H1 (cell line): ENCODE measurements at regions of chr7 and their contacts with region 1.

Region 1: DNA sequence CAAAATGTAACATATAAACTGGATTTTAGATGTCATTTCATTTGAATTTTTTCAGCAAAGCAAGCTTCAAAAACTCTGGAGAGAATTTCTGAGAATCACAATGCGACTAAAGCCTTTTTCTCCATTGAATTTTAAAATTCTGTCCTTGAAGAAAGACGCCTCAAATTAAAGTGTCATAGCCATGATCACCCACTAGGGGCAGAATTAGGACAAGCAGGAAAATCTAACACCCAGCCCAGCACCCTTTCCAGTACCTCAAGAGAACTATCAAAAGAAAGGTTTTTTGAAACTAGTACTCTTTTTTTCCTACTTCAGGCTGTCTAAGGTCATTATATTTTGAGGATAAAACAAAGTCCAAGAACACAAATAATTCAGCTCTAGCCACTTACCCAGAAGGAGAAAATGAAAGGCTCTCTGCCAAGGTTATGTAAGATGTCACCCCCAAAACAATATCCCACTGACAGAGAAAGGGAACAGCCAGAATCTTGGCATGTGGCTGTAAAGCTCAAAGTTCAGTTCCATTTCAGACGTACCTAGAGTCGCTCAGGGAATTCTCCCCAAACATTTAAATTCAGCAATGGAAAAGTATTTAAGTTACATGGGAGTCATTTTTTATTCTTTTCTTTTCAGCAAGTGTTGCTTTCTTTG is 299.4 kb downstream of the SNX13 start:
- DNase-seq: no peak
- H3K4me3 ChIP-seq: no peak overlapping the region
- H3K27ac ChIP-seq: no peak overlapping the region
- H3K4me1 ChIP-seq: no peaks in the 10 kb centered on the region; a peak in 1 of 7 replicates
- H3K27me3 ChIP-seq: no peaks in the 10 kb centered on the region
- CTCF ChIP-seq: peak in 2 of 3 experiments; percentile 31 to 67; a peak in 2 of 4 replicates
- EP300 ChIP-seq: no peak
- POLR2A ChIP-seq: no peak
- RAD21 ChIP-seq: peak; percentile 34 to 51; a peak in 3 of 4 replicates

Region 2: DNA sequence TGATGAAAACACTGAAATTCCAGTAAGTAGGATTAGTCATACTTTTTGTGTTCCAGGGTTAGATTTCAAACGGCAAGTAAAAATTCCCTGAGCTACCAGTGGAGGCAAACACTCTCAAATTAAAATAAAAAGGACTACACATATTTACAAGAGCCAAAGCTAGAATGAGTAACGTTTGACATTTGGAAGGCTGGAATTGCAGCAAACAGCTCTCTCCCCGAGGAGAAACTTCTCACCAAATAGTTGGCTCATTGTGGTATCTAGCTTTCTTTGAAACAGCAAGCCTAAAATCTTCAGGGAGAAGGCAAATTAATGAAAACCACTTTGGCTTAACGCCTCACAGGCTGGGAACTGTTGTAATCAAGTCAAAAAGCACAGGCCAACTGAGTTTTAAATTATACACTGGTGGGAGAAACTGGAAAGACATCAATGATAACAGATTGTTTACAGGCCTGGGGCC is 11.1 kb after region 1 on chr7:
- CTCF ChIA-PET with region 1: interaction called, 33 read pairs
- POLR2A ChIA-PET with region 1: no interaction called
- DNase-seq: no peak
- H3K4me3 ChIP-seq: no peak overlapping the region
- H3K27ac ChIP-seq: no peak overlapping the region
- H3K4me1 ChIP-seq: no peaks in the 10 kb centered on the region
- H3K27me3 ChIP-seq: no peaks in the 10 kb centered on the region
- CTCF ChIP-seq: no peak
- EP300 ChIP-seq: no peak
- POLR2A ChIP-seq: no peak
- RAD21 ChIP-seq: no peak